H1 (cell line): ENCODE measurements at regions of chr22 and their contacts with region 1.

Region 1: DNA sequence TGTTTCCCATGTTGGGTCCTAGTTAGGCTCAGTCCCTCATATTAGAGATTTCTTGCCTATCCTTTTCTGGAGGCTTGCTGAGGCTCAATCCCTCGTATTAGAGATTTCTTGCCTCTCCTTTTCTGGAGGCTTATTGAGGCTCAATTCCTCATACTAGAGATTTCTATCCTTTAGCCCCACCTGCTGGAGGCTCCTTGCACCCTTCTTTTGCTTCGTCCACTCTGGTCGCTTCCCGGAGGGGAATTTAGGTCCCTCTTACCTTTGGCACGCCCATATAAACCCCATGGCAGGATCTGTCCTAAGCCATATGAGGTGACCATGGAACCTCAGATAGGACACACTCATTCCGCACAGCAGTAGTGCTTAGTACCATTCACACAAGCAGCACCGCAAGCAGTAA is 15.9 kb downstream of the CYP2D6 start:
- DNase-seq: peak in 1 of 2 experiments; percentile 80
- H3K4me3 ChIP-seq: no peak overlapping the region
- H3K27ac ChIP-seq: no peak overlapping the region
- H3K4me1 ChIP-seq: peaks cover 0 to 3% (median 1%) of the 10 kb centered on the region in 4 experiments; a peak in 3 of 7 replicates
- H3K27me3 ChIP-seq: peaks cover 0 to 1% (median under 1%) of the 10 kb centered on the region in 4 experiments; a peak in 3 of 7 replicates
- CTCF ChIP-seq: peak; percentile 61 to 77 (median 70)
- EP300 ChIP-seq: no peak
- POLR2A ChIP-seq: no peak
- RAD21 ChIP-seq: peak; percentile 83

Region 2: GRCh38 chr22:41940832-41941765 is 173.6 kb before region 1 on chr22:
- CTCF ChIA-PET with region 1: interaction called, 13 read pairs
- POLR2A ChIA-PET with region 1: no interaction called
- DNase-seq: peak in 1 of 2 experiments; percentile 95
- H3K4me3 ChIP-seq: no peak overlapping the region
- H3K27ac ChIP-seq: no peak overlapping the region
- H3K4me1 ChIP-seq: peaks cover 4 to 7% (median 5%) of the 10 kb centered on the region in 4 experiments
- H3K27me3 ChIP-seq: no peaks in the 10 kb centered on the region
- CTCF ChIP-seq: peak; percentile 92 to 96 (median 95)
- EP300 ChIP-seq: no peak
- POLR2A ChIP-seq: no peak
- RAD21 ChIP-seq: peak; percentile 95 to 96

Region 3: GRCh38 chr22:41957941-41958556 is 156.7 kb before region 1 on chr22:
- CTCF ChIA-PET with region 1: interaction called, 116 read pairs
- POLR2A ChIA-PET with region 1: interaction called, 5 read pairs
- DNase-seq: no peak
- H3K4me3 ChIP-seq: peak overlapping the region; percentile 14 to 49 (median 16); a peak in 7 of 8 replicates
- H3K27ac ChIP-seq: no peak overlapping the region
- H3K4me1 ChIP-seq: peaks cover 0 to 8% (median 6%) of the 10 kb centered on the region in 4 experiments; a peak in 5 of 7 replicates
- H3K27me3 ChIP-seq: peaks cover 0 to 3% (median 1%) of the 10 kb centered on the region in 4 experiments; a peak in 2 of 7 replicates
- CTCF ChIP-seq: no peak
- EP300 ChIP-seq: no peak
- POLR2A ChIP-seq: no peak
- RAD21 ChIP-seq: no peak

Region 4: GRCh38 chr22:41976401-41976901 is 138.3 kb before region 1 on chr22:
- CTCF ChIA-PET with region 1: interaction called, 116 read pairs
- POLR2A ChIA-PET with region 1: no interaction called
- DNase-seq: peak in 1 of 2 experiments; percentile 79
- H3K4me3 ChIP-seq: peak overlapping the region; percentile 34 to 83 (median 56)
- H3K27ac ChIP-seq: no peak overlapping the region
- H3K4me1 ChIP-seq: peaks cover 0 to 14% (median 10%) of the 10 kb centered on the region in 4 experiments; a peak in 6 of 7 replicates
- H3K27me3 ChIP-seq: peaks cover 10 to 29% (median 26%) of the 10 kb centered on the region in 4 experiments
- CTCF ChIP-seq: no peak
- EP300 ChIP-seq: 0 out of 3 replicates have a peak, but pooled peaks of 1 of the 2 experiments have one; percentile 26
- POLR2A ChIP-seq: no peak
- RAD21 ChIP-seq: no peak

Region 5: GRCh38 chr22:42101199-42101598 is 13.5 kb before region 1 on chr22:
- CTCF ChIA-PET with region 1: interaction called, 19 read pairs
- POLR2A ChIA-PET with region 1: no interaction called
- DNase-seq: no peak
- H3K4me3 ChIP-seq: no peak overlapping the region
- H3K27ac ChIP-seq: no peak overlapping the region
- H3K4me1 ChIP-seq: no peaks in the 10 kb centered on the region
- H3K27me3 ChIP-seq: peaks cover 0 to 2% (median 0%) of the 10 kb centered on the region in 4 experiments; a peak in 1 of 7 replicates
- CTCF ChIP-seq: no peak
- EP300 ChIP-seq: no peak
- POLR2A ChIP-seq: no peak
- RAD21 ChIP-seq: no peak

Region 6: GRCh38 chr22:42184852-42185251 is 70.1 kb after region 1 on chr22:
- CTCF ChIA-PET with region 1: no interaction called
- POLR2A ChIA-PET with region 1: no interaction called
- DNase-seq: no peak
- H3K4me3 ChIP-seq: no peak overlapping the region
- H3K27ac ChIP-seq: no peak overlapping the region
- H3K4me1 ChIP-seq: peaks cover 0 to 8% (median 3%) of the 10 kb centered on the region in 4 experiments; a peak in 4 of 7 replicates
- H3K27me3 ChIP-seq: no peaks in the 10 kb centered on the region
- CTCF ChIP-seq: no peak
- EP300 ChIP-seq: no peak
- POLR2A ChIP-seq: no peak
- RAD21 ChIP-seq: no peak